Calu3 (cell line): ENCODE measurements at regions of chr2 and their contacts with region 1.

Region 1: DNA sequence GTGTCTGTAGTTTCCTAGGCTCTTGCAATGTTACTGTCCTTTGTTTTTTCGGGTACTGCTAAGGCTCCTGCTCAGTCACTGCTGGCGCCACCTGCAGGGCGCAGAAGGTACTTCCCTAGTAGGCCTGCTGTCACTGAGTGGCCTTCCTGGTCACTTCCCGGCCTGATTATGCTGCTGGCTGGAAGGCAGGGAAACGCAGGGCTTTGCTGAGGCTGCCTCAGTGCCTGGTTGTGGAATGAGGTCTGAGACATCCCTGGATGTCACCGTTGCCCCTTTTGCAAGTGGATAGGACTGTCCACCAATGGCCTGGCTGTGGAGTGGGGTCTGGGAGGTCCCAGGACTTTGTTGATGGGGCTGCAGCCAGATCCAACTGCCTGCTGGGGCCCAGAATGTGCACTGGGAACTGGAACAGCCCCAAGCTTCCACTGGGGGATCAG is 13.1 kb downstream of the DAW1 start:
- DNase-seq: peak; percentile 90
- H3K4me3 Mint-ChIP-seq: no peak overlapping the region
- H3K27ac Mint-ChIP-seq: peak overlapping the region; percentile 58
- H3K4me1 Mint-ChIP-seq: peaks cover 46% of the 10 kb centered on the region
- H3K27me3 Mint-ChIP-seq: no peaks in the 10 kb centered on the region
- CTCF ChIP-seq: peak; percentile 93

Region 2: DNA sequence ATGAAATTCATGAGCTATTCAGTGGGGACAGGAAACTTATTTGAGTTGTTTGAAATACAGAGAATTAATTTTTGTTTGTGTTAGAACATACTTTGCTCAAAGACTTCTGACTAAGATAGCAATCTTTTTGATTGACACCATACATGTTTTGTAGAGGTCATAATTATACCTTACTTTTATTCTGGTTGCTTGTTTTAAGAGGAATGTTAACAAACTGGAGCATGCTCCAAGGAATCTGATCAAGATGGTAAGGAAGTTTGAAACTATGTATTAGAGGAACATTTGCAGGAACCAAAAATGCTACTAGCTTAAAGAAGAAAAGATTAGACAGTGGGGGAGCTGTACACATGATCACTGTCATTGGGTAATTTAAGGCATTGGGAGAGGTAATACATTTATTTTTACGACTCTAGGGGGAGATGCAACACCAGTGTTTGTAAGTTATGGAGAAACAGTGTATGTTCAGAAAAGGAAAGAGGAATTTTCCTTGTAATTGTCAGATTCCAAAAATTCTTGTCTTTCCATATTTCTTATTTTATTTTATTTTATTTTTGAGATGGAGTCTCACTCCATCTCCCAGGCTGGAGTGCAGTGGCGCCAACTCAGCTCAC is 404.6 kb before region 1 on chr2:
- CTCF ChIA-PET with region 1: no interaction called
- intact Hi-C with region 1: loop called (anchors 10 kb)
- DNase-seq: no peak
- H3K4me3 Mint-ChIP-seq: no peak overlapping the region
- H3K27ac Mint-ChIP-seq: no peak overlapping the region
- H3K4me1 Mint-ChIP-seq: peaks cover 54% of the 10 kb centered on the region
- H3K27me3 Mint-ChIP-seq: no peaks in the 10 kb centered on the region
- CTCF ChIP-seq: peak; percentile 17

Region 3: DNA sequence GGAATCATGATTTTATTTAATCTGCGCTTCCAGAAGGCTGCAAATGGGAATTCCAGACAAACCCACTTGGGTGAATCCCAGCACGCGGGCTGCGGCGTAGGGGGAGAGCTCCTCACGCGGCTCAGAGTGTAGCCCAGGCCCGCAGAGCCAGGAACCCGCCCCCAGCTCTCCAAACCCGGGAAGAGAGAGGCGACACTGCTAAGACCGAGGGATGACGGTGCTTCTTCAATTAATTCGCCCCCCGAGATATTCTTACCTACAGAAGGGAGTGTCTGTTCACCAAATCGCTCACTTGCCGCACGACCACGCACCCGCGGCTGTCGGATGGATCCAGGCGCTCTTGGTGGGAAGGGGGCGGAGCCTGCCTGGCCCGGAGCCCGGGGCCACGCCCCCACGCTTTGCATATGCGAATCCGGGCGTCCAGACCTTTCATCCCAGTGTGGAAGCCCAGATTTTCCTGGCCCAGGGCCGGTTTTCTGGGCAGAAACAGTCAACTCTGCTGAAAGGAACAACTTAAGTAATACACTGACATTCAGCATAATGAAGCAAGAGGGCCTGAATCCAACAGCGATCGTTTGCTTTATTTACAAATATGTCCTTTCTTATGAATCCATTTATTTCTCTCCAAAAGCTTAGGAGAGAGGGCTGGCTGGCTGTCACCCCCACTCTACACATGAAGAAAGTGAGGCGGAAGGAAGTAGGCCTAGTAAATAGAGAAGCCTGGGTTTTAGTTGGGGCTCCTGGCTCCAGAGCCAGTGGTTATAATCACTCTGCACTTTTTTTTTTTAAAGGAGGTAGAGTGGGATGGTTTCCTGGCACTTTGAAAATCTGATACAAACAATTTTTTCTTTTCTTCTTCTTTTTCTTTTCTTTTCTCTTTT is 166.6 kb before region 1 on chr2 and contains the start of gene SLC19A3:
- CTCF ChIA-PET with region 1: no interaction called
- intact Hi-C with region 1: loop called (anchors 5 kb)
- DNase-seq: peak; percentile 95
- H3K4me3 Mint-ChIP-seq: peak within 1 kb of the TSS; percentile 75
- H3K27ac Mint-ChIP-seq: peak within 1 kb of the TSS; percentile 63
- H3K4me1 Mint-ChIP-seq: peaks cover 52% of the 10 kb centered on the region
- H3K27me3 Mint-ChIP-seq: no peaks in the 10 kb centered on the region
- CTCF ChIP-seq: no peak
- total RNA-seq, gene SLC19A3: 63.8 and 82.4 TPM in 2 replicates

Region 4: DNA sequence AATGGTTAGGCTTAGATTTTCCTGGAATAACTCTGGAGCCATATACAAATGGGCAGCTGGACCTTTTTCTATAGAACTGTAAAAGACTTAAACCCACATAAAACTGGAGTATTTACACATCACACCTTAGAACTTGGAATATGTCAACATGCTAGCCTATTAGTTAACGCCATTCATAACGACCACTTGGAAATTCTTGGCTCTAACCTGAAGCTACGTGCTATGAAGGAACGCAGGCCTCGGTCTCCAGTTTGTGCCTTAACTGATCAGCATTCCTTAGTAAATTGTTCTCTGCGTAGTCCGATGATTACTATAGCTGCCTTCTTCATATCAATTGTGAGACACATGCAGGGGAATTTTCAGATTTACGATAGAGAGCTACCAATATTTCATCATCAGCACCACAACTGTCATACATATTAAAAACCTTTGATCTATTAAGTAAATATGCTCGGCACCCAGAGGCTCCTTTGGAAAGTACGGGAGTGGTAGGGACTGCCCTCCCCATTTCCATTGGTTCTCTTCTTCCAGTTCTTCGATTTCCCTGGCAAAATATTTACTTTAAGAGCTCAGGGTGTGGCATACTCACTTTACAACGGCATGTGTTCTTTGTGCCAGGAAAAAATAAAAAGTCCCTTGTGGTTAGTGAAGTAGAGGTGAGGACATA is 88.4 kb before region 1 on chr2:
- CTCF ChIA-PET with region 1: no interaction called
- intact Hi-C with region 1: loop called (anchors 5 kb)
- DNase-seq: peak; percentile 65
- H3K4me3 Mint-ChIP-seq: peak overlapping the region; percentile 29
- H3K27ac Mint-ChIP-seq: peak overlapping the region; percentile 93
- H3K4me1 Mint-ChIP-seq: peaks cover 38% of the 10 kb centered on the region
- H3K27me3 Mint-ChIP-seq: no peaks in the 10 kb centered on the region
- CTCF ChIP-seq: no peak

Region 5: GRCh38 chr2:227862227-227862740 is 22.2 kb before region 1 on chr2:
- CTCF ChIA-PET with region 1: interaction called, 3 read pairs
- intact Hi-C with region 1: loop called (anchors 1 kb)
- DNase-seq: peak; percentile 63
- H3K4me3 Mint-ChIP-seq: no peak overlapping the region
- H3K27ac Mint-ChIP-seq: peak overlapping the region; percentile 69
- H3K4me1 Mint-ChIP-seq: peaks cover 38% of the 10 kb centered on the region
- H3K27me3 Mint-ChIP-seq: no peaks in the 10 kb centered on the region
- CTCF ChIP-seq: peak; percentile 49

Region 6: DNA sequence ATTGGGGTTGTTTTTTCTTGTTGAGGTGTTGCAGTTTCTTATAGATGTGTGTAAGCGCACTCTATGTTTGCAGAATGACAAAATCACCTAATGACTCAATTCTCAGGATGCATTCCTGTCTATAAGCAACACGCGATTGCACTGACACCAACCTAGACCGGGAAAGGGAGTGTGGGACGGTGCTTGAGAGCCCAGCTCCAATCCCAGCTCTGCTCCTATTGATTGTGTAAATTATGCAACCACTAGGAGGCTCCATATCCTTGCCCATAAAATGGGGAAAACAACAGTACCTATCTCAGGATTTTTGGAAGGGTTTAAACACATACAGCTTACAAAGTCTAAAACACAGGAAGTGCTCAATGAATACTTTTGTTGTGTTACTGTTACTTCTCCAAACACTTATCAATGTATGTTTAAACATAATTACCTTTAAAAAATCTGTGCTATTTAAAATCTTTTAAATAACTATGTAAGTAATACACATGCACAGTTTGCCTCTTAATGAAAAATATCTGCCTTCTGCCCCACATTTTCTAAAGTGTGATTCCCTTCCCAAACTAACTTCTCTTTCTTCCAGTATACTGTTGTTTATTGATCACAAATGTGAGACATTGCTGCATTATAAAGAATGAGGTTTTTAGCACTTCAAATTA is 164.4 kb after region 1 on chr2:
- CTCF ChIA-PET with region 1: no interaction called
- intact Hi-C with region 1: no loop called
- DNase-seq: peak; percentile 66
- H3K4me3 Mint-ChIP-seq: no peak overlapping the region
- H3K27ac Mint-ChIP-seq: no peak overlapping the region
- H3K4me1 Mint-ChIP-seq: peaks cover 16% of the 10 kb centered on the region
- H3K27me3 Mint-ChIP-seq: no peaks in the 10 kb centered on the region
- CTCF ChIP-seq: peak; percentile 66